PC-9 (cell line): ENCODE measurements at regions of chr12 and their contacts with region 1.

Region 1: GRCh38 chr12:17866802-17867201 is 223.2 kb downstream of the RERGL start:
- DNase-seq: no peak
- H3K4me3 ChIP-seq: no peak overlapping the region
- H3K27ac ChIP-seq: no peak overlapping the region
- H3K4me1 ChIP-seq: no peaks in the 10 kb centered on the region
- H3K27me3 ChIP-seq: no peaks in the 10 kb centered on the region
- CTCF ChIP-seq: no peak

Region 2: GRCh38 chr12:17778242-17778641 is 88.6 kb before region 1 on chr12:
- CTCF ChIA-PET with region 1: no interaction called
- POLR2A ChIA-PET with region 1: no interaction called
- intact Hi-C with region 1: loop called (anchors 2 kb)
- DNase-seq: no peak
- H3K4me3 ChIP-seq: no peak overlapping the region
- H3K27ac ChIP-seq: no peak overlapping the region
- H3K4me1 ChIP-seq: no peaks in the 10 kb centered on the region
- H3K27me3 ChIP-seq: no peaks in the 10 kb centered on the region
- CTCF ChIP-seq: no peak